Activated CD4-positive, alpha-beta memory T cell treated with anti-CD3 and anti-CD28 coated beads for 36 hours (primary cell): ENCODE measurements at regions of chr17 and their contacts with region 1.

Region 1: GRCh38 chr17:39963829-39964228 is 1.0 kb downstream of the GSDMA start:
- DNase-seq: peak; percentile 53
- H3K4me3 Mint-ChIP-seq: no peak overlapping the region
- H3K27ac Mint-ChIP-seq: peak overlapping the region; percentile 40
- H3K4me1 Mint-ChIP-seq: peaks cover 24% of the 10 kb centered on the region
- H3K27me3 Mint-ChIP-seq: no peaks in the 10 kb centered on the region

Region 2: DNA sequence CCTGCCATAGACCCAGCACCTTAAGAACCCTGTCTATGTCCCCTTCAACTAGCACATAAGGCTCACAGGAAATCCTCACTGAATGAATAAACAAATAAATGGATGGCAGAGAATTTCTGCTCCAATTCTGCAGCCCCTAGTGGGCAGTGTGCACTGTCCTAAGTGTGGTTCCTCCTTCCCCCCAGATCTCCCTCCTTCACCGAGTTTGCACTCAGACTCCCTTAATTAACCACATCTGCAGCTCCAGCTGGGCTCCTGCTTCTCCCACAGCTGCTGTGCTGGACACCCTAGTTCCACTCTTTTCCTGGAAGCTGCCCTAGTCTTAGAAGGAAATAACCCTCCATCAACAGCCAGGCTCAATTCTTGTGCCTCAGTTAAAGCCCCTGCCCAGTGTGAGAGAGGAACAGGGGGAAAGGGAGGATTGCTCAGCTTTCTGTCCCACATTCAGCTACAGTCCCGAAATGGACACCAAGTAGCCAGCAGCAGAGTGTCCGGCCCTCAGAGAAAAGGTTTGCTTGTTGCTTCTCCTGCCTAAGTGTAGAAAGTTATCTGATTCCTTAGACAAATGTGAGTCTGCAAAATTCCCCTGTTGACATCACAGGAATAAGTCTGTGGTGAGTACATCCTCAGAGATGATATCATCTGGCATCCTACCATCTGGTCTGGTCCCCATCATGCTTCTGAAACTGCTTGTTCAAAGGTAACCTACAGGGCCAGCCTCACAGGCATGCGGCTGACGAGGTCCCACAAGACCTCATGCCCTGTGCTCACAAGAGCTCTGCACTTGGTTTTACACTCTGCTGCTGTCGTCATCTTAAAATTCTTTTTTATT is 24.0 kb before region 1 on chr17:
- CTCF ChIA-PET with region 1: interaction called, 10 read pairs
- POLR2A ChIA-PET with region 1: no interaction called
- intact Hi-C with region 1: no loop called
- DNase-seq: peak; percentile 78
- H3K4me3 Mint-ChIP-seq: no peak overlapping the region
- H3K27ac Mint-ChIP-seq: peak overlapping the region; percentile 46
- H3K4me1 Mint-ChIP-seq: peaks cover 19% of the 10 kb centered on the region
- H3K27me3 Mint-ChIP-seq: no peaks in the 10 kb centered on the region